Endothelial cell of umbilical vein (primary cell): ENCODE measurements at regions of chr20 and their contacts with region 1.

Region 1: GRCh38 chr20:39049684-39050554 is 87.8 kb downstream of the DHX35 start:
- DNase-seq: peak; percentile 75
- H3K4me3 ChIP-seq: peak overlapping the region in 2 of 3 experiments; percentile 36 to 63
- H3K27ac ChIP-seq: no peak overlapping the region
- H3K4me1 ChIP-seq: peaks cover 3% of the 10 kb centered on the region
- H3K27me3 ChIP-seq: no peaks in the 10 kb centered on the region
- CTCF ChIP-seq: peak; percentile 97 to 98
- POLR2A ChIP-seq: peak; percentile 64

Region 2: DNA sequence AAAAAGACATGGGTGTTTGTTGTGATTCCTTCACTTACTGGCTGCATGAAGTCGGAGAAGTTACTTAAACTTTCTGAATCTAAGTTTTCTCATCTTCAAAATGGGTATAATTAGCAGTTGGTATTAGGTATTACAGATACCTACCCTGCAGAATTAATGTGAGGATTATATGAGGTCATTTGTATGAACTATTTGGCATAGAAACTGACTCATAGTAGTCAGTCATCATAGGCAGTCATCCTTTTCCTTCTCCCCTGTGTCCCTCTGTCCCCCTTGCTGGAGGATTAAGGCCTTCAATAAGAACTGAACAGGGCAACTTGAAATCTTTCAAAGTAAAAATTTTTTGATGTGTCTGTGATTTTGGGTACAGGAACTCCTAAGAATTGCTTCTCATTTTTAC is 551.0 kb before region 1 on chr20:
- CTCF ChIA-PET with region 1: no interaction called
- POLR2A ChIA-PET with region 1: no interaction called
- dilution Hi-C with region 1: no loop called
- intact Hi-C with region 1: no loop called
- DNase-seq: no peak
- H3K4me3 ChIP-seq: no peak overlapping the region
- H3K27ac ChIP-seq: no peak overlapping the region
- H3K4me1 ChIP-seq: no peaks in the 10 kb centered on the region
- H3K27me3 ChIP-seq: no peaks in the 10 kb centered on the region
- CTCF ChIP-seq: no peak
- POLR2A ChIP-seq: no peak

Region 3: GRCh38 chr20:38617011-38617829 is 432.7 kb before region 1 on chr20:
- CTCF ChIA-PET with region 1: no interaction called
- POLR2A ChIA-PET with region 1: no interaction called
- dilution Hi-C with region 1: no loop called
- intact Hi-C with region 1: no loop called
- DNase-seq: no peak
- H3K4me3 ChIP-seq: no peak overlapping the region
- H3K27ac ChIP-seq: no peak overlapping the region
- H3K4me1 ChIP-seq: no peaks in the 10 kb centered on the region
- H3K27me3 ChIP-seq: peaks cover 11 to 15% of the 10 kb centered on the region in 2 experiments
- CTCF ChIP-seq: no peak
- POLR2A ChIP-seq: no peak

Region 4: GRCh38 chr20:38645980-38646858 is 403.7 kb before region 1 on chr20:
- CTCF ChIA-PET with region 1: interaction called, 11 read pairs
- POLR2A ChIA-PET with region 1: no interaction called
- dilution Hi-C with region 1: no loop called
- intact Hi-C with region 1: loop called (anchors 1 kb)
- DNase-seq: peak; percentile 64
- H3K4me3 ChIP-seq: peak overlapping the region in 1 of 3 experiments; percentile 14
- H3K27ac ChIP-seq: no peak overlapping the region
- H3K4me1 ChIP-seq: no peaks in the 10 kb centered on the region
- H3K27me3 ChIP-seq: peaks cover 20 to 21% of the 10 kb centered on the region in 2 experiments
- CTCF ChIP-seq: peak; percentile 94 to 97
- POLR2A ChIP-seq: no peak

Region 5: DNA sequence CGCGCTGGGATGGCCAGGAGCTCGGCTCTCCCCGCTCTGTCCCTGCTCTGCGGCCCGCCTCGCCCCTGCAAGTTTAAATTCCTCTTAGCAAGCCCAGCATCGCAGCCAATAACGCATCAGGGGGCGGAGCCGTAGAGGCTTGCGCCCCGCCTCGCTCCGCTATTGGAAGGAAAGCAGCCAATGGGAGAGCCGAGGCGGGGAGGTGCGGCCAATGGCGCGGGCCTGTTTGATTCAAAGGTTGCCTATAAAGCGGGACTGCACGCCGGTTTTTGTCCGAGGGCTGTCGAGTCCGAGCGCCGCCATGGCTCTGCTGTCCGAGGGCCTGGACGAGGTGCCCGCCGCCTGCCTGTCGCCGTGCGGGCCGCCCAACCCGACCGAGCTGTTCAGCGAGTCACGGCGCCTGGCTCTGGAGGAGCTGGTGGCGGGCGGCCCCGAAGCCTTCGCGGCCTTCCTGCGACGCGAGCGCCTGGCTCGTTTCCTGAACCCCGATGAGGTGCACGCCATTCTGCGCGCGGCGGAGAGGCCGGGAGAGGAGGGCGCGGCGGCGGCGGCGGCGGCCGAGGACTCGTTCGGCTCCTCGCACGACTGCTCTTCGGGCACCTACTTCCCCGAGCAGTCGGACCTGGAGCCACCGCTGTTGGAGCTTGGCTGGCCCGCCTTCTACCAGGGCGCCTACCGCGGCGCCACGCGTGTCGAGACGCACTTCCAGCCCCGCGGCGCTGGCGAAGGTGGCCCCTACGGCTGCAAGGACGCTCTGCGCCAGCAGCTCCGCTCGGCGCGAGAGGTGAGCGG is 123.6 kb before region 1 on chr20 and contains the start of gene FAM83D:
- CTCF ChIA-PET with region 1: interaction called, 55 read pairs
- POLR2A ChIA-PET with region 1: interaction called, 3 read pairs
- dilution Hi-C with region 1: no loop called
- intact Hi-C with region 1: loop called (anchors 1 kb)
- DNase-seq: peak; percentile 100
- H3K4me3 ChIP-seq: peak within 1 kb of the TSS; percentile 60 to 98 (median 95)
- H3K27ac ChIP-seq: peak within 1 kb of the TSS; percentile 43
- H3K4me1 ChIP-seq: peaks cover 23% of the 10 kb centered on the region
- H3K27me3 ChIP-seq: no peaks in the 10 kb centered on the region
- CTCF ChIP-seq: peak in 1 of 2 donors; percentile 92
- POLR2A ChIP-seq: peak; percentile 95
- total RNA-seq, gene FAM83D: 35.5 and 46.0 TPM in 2 replicates

Region 6: DNA sequence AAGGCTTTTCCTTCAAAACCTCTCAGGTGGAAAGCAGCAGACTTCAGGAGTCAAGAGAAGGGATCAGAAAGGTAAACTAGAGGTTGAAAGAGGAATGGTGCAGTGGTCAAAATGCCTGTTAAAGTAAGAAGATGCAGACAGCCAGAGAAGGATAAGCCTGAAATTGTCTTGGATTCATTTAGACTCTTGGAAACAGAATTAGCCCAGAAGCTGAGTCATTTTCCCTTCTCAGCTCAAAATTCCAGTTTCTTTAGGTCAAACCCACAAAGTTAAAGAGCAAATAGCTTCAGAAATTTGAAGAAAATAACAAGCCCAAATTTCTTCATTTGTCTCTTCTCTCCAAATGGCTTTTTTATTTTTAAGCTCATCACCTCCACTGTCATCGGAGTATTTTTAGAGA is 13.9 kb before region 1 on chr20:
- CTCF ChIA-PET with region 1: interaction called, 24 read pairs
- POLR2A ChIA-PET with region 1: no interaction called
- dilution Hi-C with region 1: no loop called
- intact Hi-C with region 1: no loop called
- DNase-seq: no peak
- H3K4me3 ChIP-seq: no peak overlapping the region
- H3K27ac ChIP-seq: no peak overlapping the region
- H3K4me1 ChIP-seq: no peaks in the 10 kb centered on the region
- H3K27me3 ChIP-seq: no peaks in the 10 kb centered on the region
- CTCF ChIP-seq: no peak
- POLR2A ChIP-seq: no peak

Region 7: DNA sequence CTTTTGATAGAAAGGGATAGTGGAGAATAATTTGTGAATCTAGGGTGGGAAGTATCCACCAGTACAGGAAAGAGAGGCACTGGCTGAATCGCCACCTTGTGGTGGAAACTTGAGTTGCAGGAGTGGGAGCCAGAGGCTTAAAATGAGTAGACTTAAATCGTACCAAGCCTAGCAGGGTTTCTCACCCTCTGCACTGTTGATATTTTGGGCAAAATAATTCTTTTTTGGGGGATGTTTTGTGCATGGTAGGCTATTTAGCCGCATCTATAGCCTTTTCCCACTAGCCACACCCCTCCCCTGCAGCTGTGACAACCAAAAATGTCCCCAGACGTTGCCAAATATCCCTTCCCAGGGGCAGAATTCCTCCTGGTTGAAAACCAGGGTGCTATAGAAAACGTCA is 31.3 kb after region 1 on chr20:
- CTCF ChIA-PET with region 1: interaction called, 143 read pairs
- POLR2A ChIA-PET with region 1: no interaction called
- dilution Hi-C with region 1: no loop called
- intact Hi-C with region 1: loop called (anchors 1 kb)
- DNase-seq: peak; percentile 79
- H3K4me3 ChIP-seq: no peak overlapping the region
- H3K27ac ChIP-seq: no peak overlapping the region
- H3K4me1 ChIP-seq: no peaks in the 10 kb centered on the region
- H3K27me3 ChIP-seq: peaks cover 4 to 9% of the 10 kb centered on the region in 2 experiments
- CTCF ChIP-seq: peak; percentile 77 to 88
- POLR2A ChIP-seq: no peak

Region 8: DNA sequence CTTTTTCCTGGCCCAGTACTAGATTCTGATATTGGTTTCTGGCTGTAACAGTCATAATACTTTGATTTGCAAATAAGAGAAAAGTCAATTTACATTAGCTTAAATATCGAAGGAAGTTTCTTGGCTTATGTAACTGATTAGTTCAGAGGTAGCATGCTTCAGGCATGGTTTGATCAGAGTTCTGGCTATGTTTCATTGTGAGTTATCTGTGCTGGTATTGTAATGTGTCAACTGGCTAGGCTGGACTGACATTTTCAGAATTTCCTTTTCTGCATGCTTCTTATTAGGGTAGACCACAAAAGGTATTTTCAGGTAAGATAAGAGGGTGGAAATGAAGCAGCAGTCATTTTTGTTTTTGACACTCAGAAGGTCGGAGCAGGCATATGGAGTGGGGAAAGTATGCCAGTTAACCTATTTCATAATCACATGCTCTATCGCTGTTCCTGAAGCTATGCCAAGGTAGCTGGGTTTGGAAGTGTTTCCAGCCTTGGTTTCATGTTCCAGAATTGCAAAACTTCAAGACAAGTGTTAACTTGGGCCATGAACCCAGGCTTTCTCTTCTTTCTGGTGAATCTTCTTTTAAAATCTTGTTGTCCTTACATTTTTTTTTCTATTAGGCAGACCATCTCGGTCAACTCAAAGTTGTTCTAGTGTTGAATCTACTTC is 157.1 kb after region 1 on chr20:
- CTCF ChIA-PET with region 1: no interaction called
- POLR2A ChIA-PET with region 1: no interaction called
- dilution Hi-C with region 1: no loop called
- intact Hi-C with region 1: no loop called
- DNase-seq: no peak
- H3K4me3 ChIP-seq: no peak overlapping the region
- H3K27ac ChIP-seq: no peak overlapping the region
- H3K4me1 ChIP-seq: no peaks in the 10 kb centered on the region
- H3K27me3 ChIP-seq: no peaks in the 10 kb centered on the region
- CTCF ChIP-seq: no peak
- POLR2A ChIP-seq: no peak

Region 9: DNA sequence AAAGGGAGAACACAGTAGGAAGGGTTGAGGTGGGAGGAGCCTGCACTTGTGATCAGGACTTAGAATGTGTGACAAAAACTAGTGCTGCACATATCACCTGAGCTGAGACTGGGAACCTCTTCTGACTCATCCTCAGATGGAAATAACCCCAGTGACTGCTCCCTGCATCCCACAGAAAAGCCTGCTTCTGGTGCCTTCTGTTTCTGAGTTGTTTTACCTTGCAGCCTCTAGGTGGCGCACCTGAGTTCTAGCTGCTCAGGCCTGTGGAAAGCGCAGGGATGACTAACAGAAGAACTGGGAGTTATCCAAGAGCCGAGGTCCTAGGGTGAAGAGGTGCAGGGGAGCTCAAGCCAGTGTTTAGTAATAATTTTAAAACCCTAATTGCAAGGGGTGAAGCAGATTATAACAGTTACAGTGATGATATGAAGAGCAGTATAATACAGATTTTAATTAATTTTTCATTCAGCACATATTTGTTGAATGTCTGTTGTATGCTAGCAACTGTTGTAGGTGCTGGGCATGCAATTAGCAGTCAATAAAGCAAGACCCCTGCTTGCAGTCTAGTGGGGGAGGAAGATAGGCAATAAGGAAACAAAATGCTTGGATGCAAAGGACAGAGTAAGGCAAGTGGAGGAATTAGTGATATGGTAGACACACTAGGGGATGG is 214.7 kb after region 1 on chr20:
- CTCF ChIA-PET with region 1: interaction called, 8 read pairs
- POLR2A ChIA-PET with region 1: no interaction called
- dilution Hi-C with region 1: no loop called
- intact Hi-C with region 1: loop called (anchors 1 kb)
- DNase-seq: peak; percentile 72
- H3K4me3 ChIP-seq: no peak overlapping the region
- H3K27ac ChIP-seq: no peak overlapping the region
- H3K4me1 ChIP-seq: peaks cover 4% of the 10 kb centered on the region
- H3K27me3 ChIP-seq: no peaks in the 10 kb centered on the region
- CTCF ChIP-seq: peak; percentile 87 to 93
- POLR2A ChIP-seq: no peak

Region 10: GRCh38 chr20:39547546-39548408 is 497.9 kb after region 1 on chr20:
- CTCF ChIA-PET with region 1: no interaction called
- POLR2A ChIA-PET with region 1: no interaction called
- dilution Hi-C with region 1: no loop called
- intact Hi-C with region 1: no loop called
- DNase-seq: no peak
- H3K4me3 ChIP-seq: no peak overlapping the region
- H3K27ac ChIP-seq: no peak overlapping the region
- H3K4me1 ChIP-seq: no peaks in the 10 kb centered on the region
- H3K27me3 ChIP-seq: no peaks in the 10 kb centered on the region
- CTCF ChIP-seq: no peak
- POLR2A ChIP-seq: no peak

Region 11: DNA sequence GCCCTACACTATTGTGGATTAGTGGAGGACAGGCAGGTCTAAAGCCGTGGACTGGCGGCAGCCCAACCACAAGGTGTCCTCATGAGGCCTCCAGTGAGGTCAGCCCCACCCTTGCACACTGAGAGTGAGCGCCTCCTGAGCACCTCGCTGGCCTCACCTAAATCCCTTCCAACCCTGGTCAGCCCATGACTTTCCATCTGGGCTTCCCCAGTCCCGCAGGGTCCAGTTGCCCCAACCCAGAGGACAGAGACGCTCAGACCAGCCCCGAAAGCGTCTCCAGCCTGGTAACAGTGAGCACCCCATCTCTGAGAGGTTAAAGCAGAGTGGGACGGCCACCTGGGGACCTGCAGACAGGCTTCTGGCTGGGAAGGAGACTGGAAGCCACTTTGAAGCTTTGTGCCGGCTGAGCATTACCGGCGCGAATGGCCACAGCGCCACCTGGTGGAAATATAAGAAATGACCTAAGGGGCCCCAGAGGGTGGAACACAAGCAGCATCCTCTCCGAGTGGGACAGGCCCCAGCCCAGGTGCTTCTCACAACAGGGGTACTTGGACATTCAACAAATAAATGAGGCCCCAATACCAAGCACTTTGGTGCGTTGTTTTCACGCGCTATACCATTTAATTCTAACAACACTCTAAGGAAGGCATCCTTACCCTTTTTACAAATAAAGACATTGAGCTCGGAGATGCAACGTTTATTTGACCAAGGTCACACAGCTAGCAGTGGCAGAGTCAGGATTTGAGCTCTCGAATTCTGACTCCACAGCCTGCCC is 1913.0 kb after region 1 on chr20:
- CTCF ChIA-PET with region 1: interaction called, 30 read pairs
- POLR2A ChIA-PET with region 1: no interaction called
- dilution Hi-C with region 1: no loop called
- intact Hi-C with region 1: no loop called
- DNase-seq: peak; percentile 62
- H3K4me3 ChIP-seq: no peak overlapping the region
- H3K27ac ChIP-seq: no peak overlapping the region
- H3K4me1 ChIP-seq: no peaks in the 10 kb centered on the region
- H3K27me3 ChIP-seq: no peaks in the 10 kb centered on the region
- CTCF ChIP-seq: peak; percentile 78 to 82
- POLR2A ChIP-seq: no peak